ENCODE measurements at regions of chr11 and their contacts with region 1.

Region 1: GRCh38 chr11:118401151-118401878 is at the start of gene ATP5MG:
- DNase-seq: peak; percentile 87 to 98 (median 92)
- ATAC-seq: peak; percentile 58
- H3K4me3 ChIP-seq: peak within 1 kb of the TSS; percentile 97
- H3K4me3 Mint-ChIP-seq: peak within 1 kb of the TSS; percentile 93
- H3K27ac ChIP-seq: peak within 1 kb of the TSS; percentile 90 to 93
- H3K27ac Mint-ChIP-seq: peak within 1 kb of the TSS; percentile 96
- H3K4me1 ChIP-seq: peaks cover 46% of the 10 kb centered on the region
- H3K4me1 Mint-ChIP-seq: peaks cover 77% of the 10 kb centered on the region
- H3K27me3 ChIP-seq: no peaks in the 10 kb centered on the region
- H3K27me3 Mint-ChIP-seq: no peaks in the 10 kb centered on the region
- CTCF ChIP-seq: no peak
- total RNA-seq, gene ATP5MG: 147 to 153 TPM

Region 2: DNA sequence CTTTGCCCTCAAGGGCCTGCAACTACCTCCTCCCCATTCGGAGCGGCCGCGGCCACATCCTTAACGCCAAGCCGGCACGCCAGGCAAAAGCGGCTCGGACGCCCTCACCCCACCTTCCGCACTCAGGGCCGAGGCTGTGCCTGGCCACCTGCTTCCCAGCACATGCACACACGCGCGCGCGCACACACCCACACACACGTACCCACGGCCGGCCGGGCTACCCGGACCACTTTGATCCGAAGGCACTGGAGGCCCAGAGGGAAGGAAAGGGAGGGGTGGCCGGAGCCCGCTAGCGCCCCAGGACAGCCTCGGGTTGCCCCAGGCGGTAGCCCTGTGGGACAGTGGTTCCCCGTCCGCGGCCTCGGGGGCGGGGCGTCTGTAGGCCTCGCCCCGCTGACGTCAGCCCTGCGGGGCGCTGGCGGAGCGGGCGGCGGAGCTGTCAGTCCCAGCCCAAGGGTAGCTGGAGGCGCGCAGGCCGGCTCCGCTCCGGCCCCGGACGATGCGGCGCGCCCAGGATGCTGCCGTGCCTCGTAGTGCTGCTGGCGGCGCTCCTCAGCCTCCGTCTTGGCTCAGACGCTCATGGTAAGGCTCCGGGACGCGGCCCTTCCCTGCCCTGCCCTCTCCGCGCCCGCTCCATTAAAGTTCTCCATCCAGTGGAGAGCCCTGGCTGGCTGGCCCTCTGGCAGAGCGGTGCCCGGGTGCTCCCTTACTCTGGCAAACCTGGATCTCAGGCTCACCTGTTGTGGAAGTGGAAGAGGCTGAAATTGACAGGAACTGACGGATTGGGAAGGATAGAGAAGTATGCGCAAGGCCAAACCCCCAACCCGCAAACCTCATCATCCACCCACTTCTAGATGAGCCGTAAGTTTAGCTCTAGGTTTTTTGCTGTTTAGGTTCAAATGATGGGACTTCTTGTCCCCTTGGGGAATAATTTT is 415.1 kb before region 1 on chr11 and contains the start of gene IL10RA:
- CTCF ChIA-PET with region 1: no interaction called
- POLR2A ChIA-PET with region 1: no interaction called
- intact Hi-C with region 1: no loop called
- DNase-seq: peak; percentile 57 to 93 (median 78)
- ATAC-seq: peak; percentile 72
- H3K4me3 ChIP-seq: peak within 1 kb of the TSS; percentile 98
- H3K4me3 Mint-ChIP-seq: peak within 1 kb of the TSS; percentile 90
- H3K27ac ChIP-seq: peak within 1 kb of the TSS; percentile 88 to 93
- H3K27ac Mint-ChIP-seq: peak within 1 kb of the TSS; percentile 87
- H3K4me1 ChIP-seq: peaks cover 66% of the 10 kb centered on the region
- H3K4me1 Mint-ChIP-seq: peaks cover 72% of the 10 kb centered on the region
- H3K27me3 ChIP-seq: no peaks in the 10 kb centered on the region
- H3K27me3 Mint-ChIP-seq: no peaks in the 10 kb centered on the region
- CTCF ChIP-seq: no peak
- total RNA-seq, gene IL10RA: 193 to 203 TPM

Region 3: GRCh38 chr11:118359295-118359958 is 41.9 kb before region 1 on chr11 and contains the start of gene UBE4A:
- CTCF ChIA-PET with region 1: no interaction called
- POLR2A ChIA-PET with region 1: interaction called, 5 read pairs
- intact Hi-C with region 1: loop called (anchors 5 kb)
- DNase-seq: peak; percentile 95 to 99 (median 98)
- ATAC-seq: peak; percentile 84
- H3K4me3 ChIP-seq: peak within 1 kb of the TSS; percentile 74
- H3K4me3 Mint-ChIP-seq: peak within 1 kb of the TSS; percentile 92
- H3K27ac ChIP-seq: peak within 1 kb of the TSS; percentile 89
- H3K27ac Mint-ChIP-seq: peak within 1 kb of the TSS; percentile 99
- H3K4me1 ChIP-seq: peaks cover 31% of the 10 kb centered on the region
- H3K4me1 Mint-ChIP-seq: peaks cover 60% of the 10 kb centered on the region
- H3K27me3 ChIP-seq: no peaks in the 10 kb centered on the region
- H3K27me3 Mint-ChIP-seq: peaks cover 8% of the 10 kb centered on the region
- CTCF ChIP-seq: no peak
- total RNA-seq, gene UBE4A: 40.1 to 43.0 TPM

Region 4: GRCh38 chr11:118364956-118365615 is 36.2 kb before region 1 on chr11:
- CTCF ChIA-PET with region 1: no interaction called
- POLR2A ChIA-PET with region 1: no interaction called
- intact Hi-C with region 1: loop called in 1 of 2 experiments (anchors 5 kb)
- DNase-seq: no peak
- ATAC-seq: no peak
- H3K4me3 ChIP-seq: no peak overlapping the region
- H3K4me3 Mint-ChIP-seq: no peak overlapping the region
- H3K27ac ChIP-seq: no peak overlapping the region
- H3K27ac Mint-ChIP-seq: no peak overlapping the region
- H3K4me1 ChIP-seq: peaks cover 22% of the 10 kb centered on the region
- H3K4me1 Mint-ChIP-seq: peaks cover 44% of the 10 kb centered on the region
- H3K27me3 ChIP-seq: no peaks in the 10 kb centered on the region
- H3K27me3 Mint-ChIP-seq: no peaks in the 10 kb centered on the region
- CTCF ChIP-seq: no peak

Region 5: GRCh38 chr11:118488480-118489109 is 87.3 kb after region 1 on chr11:
- CTCF ChIA-PET with region 1: interaction called, 30 read pairs
- POLR2A ChIA-PET with region 1: interaction called, 4 read pairs
- intact Hi-C with region 1: loop called (anchors 2 to 5 kb)
- DNase-seq: peak; percentile 67 to 91 (median 76)
- ATAC-seq: peak; percentile 88
- H3K4me3 ChIP-seq: no peak overlapping the region
- H3K4me3 Mint-ChIP-seq: no peak overlapping the region
- H3K27ac ChIP-seq: peak overlapping the region in 1 of 2 donors; percentile 37
- H3K27ac Mint-ChIP-seq: peak overlapping the region; percentile 4
- H3K4me1 ChIP-seq: peaks cover 2% of the 10 kb centered on the region
- H3K4me1 Mint-ChIP-seq: peaks cover 5% of the 10 kb centered on the region
- H3K27me3 ChIP-seq: no peaks in the 10 kb centered on the region
- H3K27me3 Mint-ChIP-seq: no peaks in the 10 kb centered on the region
- CTCF ChIP-seq: peak; percentile 89

Measured in CD4-positive, alpha-beta T cell (primary cell).